Motor neuron (in vitro differentiated cells): ENCODE measurements at regions of chr6 and their contacts with region 1.

Region 1: GRCh38 chr6:52577022-52577777 is at the start of gene TRAM2:
- ATAC-seq: peak; percentile 63 to 89 (median 86)
- H3K4me3 ChIP-seq: peak within 1 kb of the TSS; percentile 57 to 92 (median 72)
- H3K27ac ChIP-seq: peak within 1 kb of the TSS; percentile 59 to 81
- H3K4me1 ChIP-seq: peaks cover 5 to 8% of the 10 kb centered on the region in 2 donors
- total RNA-seq, gene TRAM2: 1.8 to 38.0 (median 10.7) TPM

Region 2: GRCh38 chr6:52995913-52996645 is 418.9 kb after region 1 on chr6:
- in situ Hi-C with region 1: loop called in 1 of 9 experiments (anchors 25 kb)
- ATAC-seq: no peak
- H3K4me3 ChIP-seq: peak overlapping the region; percentile 22 to 80 (median 65)
- H3K27ac ChIP-seq: no peak overlapping the region
- H3K4me1 ChIP-seq: peaks cover 0 to 6% of the 10 kb centered on the region in 2 donors